Dendritic cell treated with granulocyte-macrophage colony-stimulating factor and Interleukin-4, amounts not matched to agents 40 ng/mL and 50 ng/mL, for 4 days (primary cell): ENCODE measurements at regions of chr11 and their contacts with region 1.

Region 1: DNA sequence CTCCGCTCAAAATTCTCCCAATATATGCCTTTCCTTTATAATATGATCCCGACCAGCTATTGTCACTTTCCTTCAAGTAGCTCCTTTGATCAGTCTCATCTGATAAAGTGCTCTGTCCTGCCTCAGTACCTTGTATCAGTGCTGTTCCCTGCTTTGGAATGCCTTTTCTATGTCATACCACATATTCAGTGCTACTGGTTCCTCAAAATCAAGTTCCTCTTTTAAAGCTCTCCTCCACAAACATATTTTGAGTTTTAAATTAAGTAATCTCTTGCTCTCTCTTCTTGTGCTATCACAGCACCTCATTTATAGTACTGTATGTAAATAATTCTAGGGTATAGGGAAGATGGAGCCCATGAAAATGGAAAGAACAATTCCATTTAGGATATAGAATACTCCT is 137.1 kb upstream of the CTSC start:
- H3K4me3 Mint-ChIP-seq: no peak overlapping the region
- H3K27ac Mint-ChIP-seq: peak overlapping the region; percentile 30
- H3K4me1 Mint-ChIP-seq: peaks cover 28% of the 10 kb centered on the region
- H3K27me3 Mint-ChIP-seq: no peaks in the 10 kb centered on the region

Region 2: DNA sequence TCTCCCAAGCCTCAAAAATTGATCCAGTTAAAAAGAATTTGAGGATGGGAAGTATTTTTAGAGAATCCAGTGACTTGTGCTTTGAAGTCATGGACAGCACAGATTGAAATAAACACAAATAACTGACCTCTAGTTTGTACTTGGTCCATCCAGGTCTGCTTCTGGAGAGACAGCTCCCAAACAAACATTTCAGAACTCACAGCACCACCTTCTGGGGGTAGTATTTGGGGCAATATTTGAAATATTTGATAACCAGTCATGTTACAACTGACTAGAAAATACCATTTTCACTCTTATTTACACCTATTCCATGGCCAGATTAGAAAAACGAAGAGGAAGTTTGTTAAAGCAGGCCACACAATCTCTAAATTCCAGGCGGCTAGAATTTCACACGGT is 193.3 kb before region 1 on chr11:
- intact Hi-C with region 1: no loop called
- H3K4me3 Mint-ChIP-seq: no peak overlapping the region
- H3K27ac Mint-ChIP-seq: no peak overlapping the region
- H3K4me1 Mint-ChIP-seq: peaks cover 16% of the 10 kb centered on the region
- H3K27me3 Mint-ChIP-seq: no peaks in the 10 kb centered on the region

Region 3: GRCh38 chr11:88435189-88435814 is 39.4 kb before region 1 on chr11:
- intact Hi-C with region 1: loop called (anchors 1 kb)
- H3K4me3 Mint-ChIP-seq: peak overlapping the region; percentile 27
- H3K27ac Mint-ChIP-seq: peak overlapping the region; percentile 86
- H3K4me1 Mint-ChIP-seq: peaks cover 86% of the 10 kb centered on the region
- H3K27me3 Mint-ChIP-seq: no peaks in the 10 kb centered on the region